ENCODE measurements at regions of chr7 and their contacts with region 1.

Region 1: GRCh38 chr7:4883374-4884144 is at the start of gene RADIL:
- DNase-seq: peak; percentile 93 to 95 (median 95)
- H3K4me3 ChIP-seq: peak within 1 kb of the TSS; percentile 18 to 66 (median 48)
- H3K27ac ChIP-seq: no peak within 1 kb of the TSS
- H3K4me1 ChIP-seq: peaks cover 0 to 17% (median 15%) of the 10 kb centered on the region in 4 experiments
- H3K27me3 ChIP-seq: peaks cover 0 to 28% (median 22%) of the 10 kb centered on the region in 5 experiments

Region 2: GRCh38 chr7:4849369-4849768 is 34.2 kb before region 1 on chr7:
- CTCF ChIA-PET with region 1: interaction called, 11 read pairs
- POLR2A ChIA-PET with region 1: interaction called, 3 read pairs
- DNase-seq: peak; percentile 27 to 66 (median 64)
- H3K4me3 ChIP-seq: no peak overlapping the region
- H3K27ac ChIP-seq: no peak overlapping the region
- H3K4me1 ChIP-seq: peaks cover 0 to 4% (median 2%) of the 10 kb centered on the region in 4 experiments
- H3K27me3 ChIP-seq: no peaks in the 10 kb centered on the region

Region 3: DNA sequence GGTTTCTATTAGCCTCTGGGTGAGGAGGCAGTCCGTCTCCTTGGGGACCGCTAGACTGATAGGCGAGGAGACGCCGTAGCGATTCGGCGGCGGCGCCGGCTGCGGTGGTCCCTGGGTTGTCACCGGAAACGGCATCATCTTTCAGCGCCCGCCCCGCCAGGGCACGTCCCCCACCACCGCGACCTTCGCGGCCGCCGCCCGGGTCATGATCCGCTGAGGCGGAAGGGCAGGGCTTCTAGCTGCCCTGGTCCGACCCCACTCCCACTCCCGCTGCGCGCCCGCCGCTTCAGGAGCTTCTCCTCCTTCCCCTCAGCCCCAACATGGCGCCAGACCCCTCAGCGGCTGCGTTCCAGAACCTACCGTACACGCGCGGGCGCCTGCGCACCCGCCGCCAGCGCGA is 21.9 kb before region 1 on chr7 and contains the start of gene PAPOLB:
- CTCF ChIA-PET with region 1: interaction called, 12 read pairs
- POLR2A ChIA-PET with region 1: no interaction called
- DNase-seq: peak; percentile 60 to 91 (median 82)
- H3K4me3 ChIP-seq: peak within 1 kb of the TSS; percentile 49 to 77 (median 60)
- H3K27ac ChIP-seq: no peak within 1 kb of the TSS
- H3K4me1 ChIP-seq: peaks cover 0 to 8% (median 3%) of the 10 kb centered on the region in 4 experiments
- H3K27me3 ChIP-seq: peaks cover 6 to 53% (median 9%) of the 10 kb centered on the region in 5 experiments